ENCODE measurements at regions of chr13 and their contacts with region 1.

Region 1: DNA sequence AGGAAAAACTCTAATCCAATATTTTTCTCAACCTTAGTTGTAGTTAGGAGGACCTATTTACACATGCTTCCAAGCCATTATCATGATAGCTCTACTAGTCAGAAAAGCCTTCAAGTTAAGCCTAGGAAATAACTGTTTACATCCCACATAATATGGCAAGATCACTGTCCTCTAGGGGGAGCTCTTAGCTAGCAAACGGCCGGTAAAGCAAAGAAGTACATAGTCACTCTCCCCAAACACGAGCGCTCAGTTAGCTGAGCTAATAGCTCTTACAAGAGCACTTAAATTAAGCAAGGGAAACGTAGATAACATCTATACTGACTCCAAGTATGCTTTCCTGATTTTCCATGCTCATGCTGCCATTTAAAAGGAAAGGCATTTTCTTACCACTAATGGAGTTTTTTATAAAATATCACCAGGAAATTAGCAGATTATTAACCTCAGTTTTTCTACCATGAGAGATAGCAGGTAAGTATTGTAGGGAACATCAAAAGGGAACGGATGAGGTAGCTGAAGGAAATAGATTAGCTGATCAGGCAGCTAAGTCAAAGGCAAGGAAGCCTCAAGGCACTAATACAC is 100.6 kb upstream of the PABPC3 start:
- DNase-seq: no peak
- ATAC-seq: peak; percentile 98
- H3K4me3 ChIP-seq: no peak overlapping the region
- H3K27ac ChIP-seq: no peak overlapping the region
- H3K4me1 ChIP-seq: no peaks in the 10 kb centered on the region
- H3K27me3 ChIP-seq: no peaks in the 10 kb centered on the region
- CTCF ChIP-seq: peak; percentile 74 to 85 (median 76)
- EP300 ChIP-seq: no peak
- POLR2A ChIP-seq: no peak
- RAD21 ChIP-seq: peak; percentile 71

Region 2: DNA sequence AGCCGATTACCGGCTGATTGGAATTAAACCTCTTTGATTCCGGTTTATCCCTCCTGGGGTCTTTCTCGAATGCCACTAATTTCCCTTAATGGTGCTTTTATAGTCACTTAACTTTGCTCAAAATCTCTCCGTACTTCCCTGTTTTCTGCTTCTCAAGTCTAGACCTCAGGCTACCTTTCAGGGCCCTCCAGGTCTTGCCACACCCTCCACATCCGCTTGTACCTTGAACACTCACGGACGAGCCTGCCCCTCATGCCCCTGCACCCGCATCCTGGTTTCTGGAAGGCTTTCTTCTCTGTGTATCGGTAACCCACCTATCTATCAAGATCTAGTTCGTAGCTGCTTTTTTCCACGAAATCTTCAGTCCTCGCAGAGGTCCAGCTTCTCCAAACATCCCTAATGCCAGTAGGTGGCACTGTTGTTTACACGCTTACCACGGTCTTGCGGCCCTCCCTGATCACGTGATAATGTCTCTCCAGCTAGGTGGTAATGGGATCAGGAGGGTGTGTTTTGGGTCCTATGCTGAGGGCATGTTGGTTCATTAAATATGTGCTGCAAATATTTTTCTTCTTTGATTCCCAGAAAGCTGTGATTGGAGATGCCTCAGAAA is 301.3 kb before region 1 on chr13:
- CTCF ChIA-PET with region 1: interaction called, 12 read pairs
- POLR2A ChIA-PET with region 1: no interaction called
- RAD21 ChIA-PET with region 1: interaction called, 10 read pairs
- SMC1A ChIA-PET with region 1: interaction called, 6 read pairs
- in situ Hi-C with region 1: no loop called
- intact Hi-C with region 1: loop called (anchors 5 kb)
- DNase-seq: no peak
- ATAC-seq: peak; percentile 96
- H3K4me3 ChIP-seq: no peak overlapping the region
- H3K27ac ChIP-seq: no peak overlapping the region
- H3K4me1 ChIP-seq: no peaks in the 10 kb centered on the region; the same call in 1 of the 2 replicates
- H3K27me3 ChIP-seq: peaks cover 2 to 6% of the 10 kb centered on the region in 2 experiments; a peak in 1 of 4 replicates
- CTCF ChIP-seq: peak; percentile 72 to 81 (median 80)
- EP300 ChIP-seq: no peak
- POLR2A ChIP-seq: no peak
- RAD21 ChIP-seq: peak; percentile 80

Region 3: DNA sequence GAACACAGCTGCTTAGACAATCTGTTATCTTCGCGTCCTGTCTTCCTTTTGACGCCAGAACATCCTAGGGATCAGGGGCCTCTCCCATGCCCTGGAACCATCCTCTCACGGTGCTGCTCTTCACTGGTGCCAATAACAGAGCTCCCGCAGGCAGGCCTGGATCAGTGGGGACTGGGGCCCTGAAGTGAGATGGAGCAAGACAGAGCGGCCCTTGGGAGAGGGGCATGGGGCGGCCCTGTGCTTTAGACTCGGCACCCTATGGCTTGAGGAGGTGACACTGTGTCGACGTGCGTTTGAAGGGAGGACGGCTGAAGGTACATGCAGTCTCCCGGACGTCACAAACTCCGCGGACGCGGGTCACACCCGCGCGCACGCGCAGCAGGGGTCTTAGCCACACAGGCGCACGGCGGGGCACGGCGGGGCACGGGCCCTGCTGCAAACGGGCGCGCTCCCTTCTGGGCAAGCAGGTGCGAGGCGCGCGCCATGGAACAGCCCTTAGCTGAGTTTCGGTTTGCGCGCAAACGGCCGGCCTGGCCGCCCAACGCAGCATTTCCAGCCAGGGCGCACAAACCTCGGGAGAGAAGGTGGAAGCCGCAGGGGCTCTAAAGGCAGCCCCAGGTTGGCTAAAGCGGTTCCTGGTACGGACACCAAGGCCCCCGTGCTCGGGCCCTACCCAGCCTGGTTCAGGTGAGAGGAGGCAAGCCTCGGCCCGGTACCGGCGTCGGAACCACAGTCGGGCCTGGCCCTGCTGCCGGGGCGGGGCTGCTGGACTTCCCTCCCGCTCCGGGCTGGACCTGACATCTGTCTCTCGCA is 247.9 kb before region 1 on chr13:
- CTCF ChIA-PET with region 1: no interaction called
- POLR2A ChIA-PET with region 1: no interaction called
- RAD21 ChIA-PET with region 1: no interaction called
- SMC1A ChIA-PET with region 1: no interaction called
- in situ Hi-C with region 1: no loop called
- intact Hi-C with region 1: loop called (anchors 10 kb)
- DNase-seq: no peak
- ATAC-seq: peak; percentile 38
- H3K4me3 ChIP-seq: peak overlapping the region; percentile 30; the same call in 1 of the 2 replicates
- H3K27ac ChIP-seq: no peak overlapping the region
- H3K4me1 ChIP-seq: no peaks in the 10 kb centered on the region
- H3K27me3 ChIP-seq: peaks cover 10 to 24% of the 10 kb centered on the region in 2 experiments
- CTCF ChIP-seq: no peak
- EP300 ChIP-seq: no peak
- POLR2A ChIP-seq: no peak
- RAD21 ChIP-seq: no peak

Region 4: GRCh38 chr13:24922745-24923591 is 72.3 kb before region 1 on chr13:
- CTCF ChIA-PET with region 1: no interaction called
- POLR2A ChIA-PET with region 1: no interaction called
- RAD21 ChIA-PET with region 1: no interaction called
- SMC1A ChIA-PET with region 1: no interaction called
- in situ Hi-C with region 1: no loop called
- intact Hi-C with region 1: no loop called
- DNase-seq: peak; percentile 93
- ATAC-seq: peak; percentile 95
- H3K4me3 ChIP-seq: peak overlapping the region; percentile 90
- H3K27ac ChIP-seq: peak overlapping the region; percentile 100
- H3K4me1 ChIP-seq: peaks cover 8% of the 10 kb centered on the region; the same call in 1 of the 2 replicates
- H3K27me3 ChIP-seq: no peaks in the 10 kb centered on the region
- CTCF ChIP-seq: no peak
- EP300 ChIP-seq: peak; percentile 36 to 48; a peak in 3 of 4 replicates
- POLR2A ChIP-seq: peak; percentile 90
- RAD21 ChIP-seq: no peak

Region 5: GRCh38 chr13:24982333-24982999 is 12.8 kb before region 1 on chr13:
- CTCF ChIA-PET with region 1: interaction called, 29 read pairs
- POLR2A ChIA-PET with region 1: no interaction called
- RAD21 ChIA-PET with region 1: no interaction called
- SMC1A ChIA-PET with region 1: no interaction called
- in situ Hi-C with region 1: no loop called
- intact Hi-C with region 1: no loop called
- DNase-seq: no peak
- ATAC-seq: no peak
- H3K4me3 ChIP-seq: no peak overlapping the region
- H3K27ac ChIP-seq: no peak overlapping the region
- H3K4me1 ChIP-seq: no peaks in the 10 kb centered on the region
- H3K27me3 ChIP-seq: peaks cover 2 to 6% of the 10 kb centered on the region in 2 experiments; a peak in 2 of 4 replicates
- CTCF ChIP-seq: no peak
- EP300 ChIP-seq: no peak
- POLR2A ChIP-seq: no peak
- RAD21 ChIP-seq: no peak

Region 6: DNA sequence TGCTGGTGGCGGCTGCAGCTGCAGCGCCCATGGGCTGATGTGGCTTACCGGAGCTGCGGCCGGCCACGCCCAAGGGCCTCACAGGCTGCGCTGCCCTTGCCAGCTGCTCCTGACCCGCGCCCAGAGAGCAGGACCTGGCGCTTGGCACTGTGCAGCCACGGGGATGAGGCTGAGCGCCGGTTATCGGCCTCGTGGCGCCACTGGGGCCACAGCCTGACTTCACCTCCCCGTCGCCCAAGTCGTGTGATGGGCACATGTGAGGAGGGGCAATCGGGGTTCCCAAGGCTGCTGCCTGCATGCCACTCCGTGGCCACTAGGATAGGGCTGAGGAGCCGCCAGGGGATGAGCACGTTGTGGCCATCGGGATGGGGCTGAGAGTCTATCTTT is 23.4 kb after region 1 on chr13:
- CTCF ChIA-PET with region 1: interaction called, 10 read pairs
- POLR2A ChIA-PET with region 1: no interaction called
- RAD21 ChIA-PET with region 1: no interaction called
- SMC1A ChIA-PET with region 1: no interaction called
- in situ Hi-C with region 1: no loop called
- intact Hi-C with region 1: no loop called
- DNase-seq: no peak
- ATAC-seq: no peak
- H3K4me3 ChIP-seq: no peak overlapping the region
- H3K27ac ChIP-seq: no peak overlapping the region
- H3K4me1 ChIP-seq: no peaks in the 10 kb centered on the region
- H3K27me3 ChIP-seq: no peaks in the 10 kb centered on the region; a peak in 3 of 4 replicates
- CTCF ChIP-seq: no peak
- EP300 ChIP-seq: no peak
- POLR2A ChIP-seq: no peak
- RAD21 ChIP-seq: no peak

Region 7: GRCh38 chr13:25037057-25037813 is 41.9 kb after region 1 on chr13:
- CTCF ChIA-PET with region 1: interaction called, 10 read pairs
- POLR2A ChIA-PET with region 1: no interaction called
- RAD21 ChIA-PET with region 1: no interaction called
- SMC1A ChIA-PET with region 1: interaction called, 4 read pairs
- in situ Hi-C with region 1: no loop called
- intact Hi-C with region 1: no loop called
- DNase-seq: no peak
- ATAC-seq: peak; percentile 96
- H3K4me3 ChIP-seq: no peak overlapping the region
- H3K27ac ChIP-seq: no peak overlapping the region
- H3K4me1 ChIP-seq: no peaks in the 10 kb centered on the region; the same call in 1 of the 2 replicates
- H3K27me3 ChIP-seq: peaks cover 2 to 3% of the 10 kb centered on the region in 2 experiments; a peak in 3 of 4 replicates
- CTCF ChIP-seq: peak; percentile 69 to 83 (median 73)
- EP300 ChIP-seq: no peak
- POLR2A ChIP-seq: no peak
- RAD21 ChIP-seq: peak; percentile 77

Region 8: GRCh38 chr13:25059958-25060357 is 64.6 kb after region 1 on chr13:
- CTCF ChIA-PET with region 1: no interaction called
- POLR2A ChIA-PET with region 1: no interaction called
- RAD21 ChIA-PET with region 1: no interaction called
- SMC1A ChIA-PET with region 1: no interaction called
- in situ Hi-C with region 1: no loop called
- intact Hi-C with region 1: no loop called
- DNase-seq: no peak
- ATAC-seq: no peak
- H3K4me3 ChIP-seq: no peak overlapping the region
- H3K27ac ChIP-seq: no peak overlapping the region
- H3K4me1 ChIP-seq: no peaks in the 10 kb centered on the region
- H3K27me3 ChIP-seq: peaks cover 0 to 4% of the 10 kb centered on the region in 2 experiments; a peak in 1 of 4 replicates
- CTCF ChIP-seq: no peak
- EP300 ChIP-seq: no peak
- POLR2A ChIP-seq: no peak
- RAD21 ChIP-seq: no peak

Region 9: DNA sequence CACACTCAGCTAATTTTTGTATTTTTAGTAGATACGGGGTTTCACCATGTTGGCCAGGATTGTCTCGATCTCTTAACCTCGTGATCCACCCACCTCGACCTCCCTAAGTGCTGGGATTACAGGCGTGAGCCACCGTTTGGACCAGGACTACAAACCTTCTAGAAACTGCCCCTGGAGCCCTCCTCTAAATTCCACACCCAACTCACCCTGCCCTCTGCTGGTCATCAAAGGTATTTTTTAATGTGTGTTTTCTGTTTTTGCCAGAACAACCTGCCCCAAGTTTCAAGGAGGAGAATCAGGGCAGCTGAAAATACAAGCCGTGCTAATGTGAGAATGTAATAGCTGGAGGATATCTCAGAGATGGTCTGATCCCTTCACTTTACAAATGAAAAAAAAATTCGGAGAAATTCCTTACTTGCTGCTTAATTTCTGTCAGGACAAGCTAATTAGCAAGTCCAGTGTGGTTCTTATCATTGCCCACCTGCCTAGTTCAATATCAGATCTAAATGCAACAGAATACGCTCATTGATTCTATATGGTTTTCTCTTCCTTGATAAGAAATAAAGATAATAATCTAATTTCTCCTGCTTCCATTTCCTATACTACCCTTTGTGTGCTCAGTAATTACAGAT is 380.5 kb after region 1 on chr13:
- CTCF ChIA-PET with region 1: interaction called, 7 read pairs
- POLR2A ChIA-PET with region 1: no interaction called
- RAD21 ChIA-PET with region 1: no interaction called
- SMC1A ChIA-PET with region 1: no interaction called
- in situ Hi-C with region 1: no loop called
- intact Hi-C with region 1: loop called (anchors 5 kb)
- DNase-seq: no peak
- ATAC-seq: peak; percentile 78
- H3K4me3 ChIP-seq: no peak overlapping the region
- H3K27ac ChIP-seq: no peak overlapping the region
- H3K4me1 ChIP-seq: no peaks in the 10 kb centered on the region
- H3K27me3 ChIP-seq: peaks cover 8 to 10% of the 10 kb centered on the region in 2 experiments; a peak in 3 of 4 replicates
- CTCF ChIP-seq: peak; percentile 57 to 65 (median 62); a peak in 5 of 6 replicates
- EP300 ChIP-seq: no peak
- POLR2A ChIP-seq: no peak
- RAD21 ChIP-seq: peak; percentile 67